Naive thymus-derived CD4-positive, alpha-beta T cell (primary cell): ENCODE measurements at regions of chrX and their contacts with region 1.

Region 1: DNA sequence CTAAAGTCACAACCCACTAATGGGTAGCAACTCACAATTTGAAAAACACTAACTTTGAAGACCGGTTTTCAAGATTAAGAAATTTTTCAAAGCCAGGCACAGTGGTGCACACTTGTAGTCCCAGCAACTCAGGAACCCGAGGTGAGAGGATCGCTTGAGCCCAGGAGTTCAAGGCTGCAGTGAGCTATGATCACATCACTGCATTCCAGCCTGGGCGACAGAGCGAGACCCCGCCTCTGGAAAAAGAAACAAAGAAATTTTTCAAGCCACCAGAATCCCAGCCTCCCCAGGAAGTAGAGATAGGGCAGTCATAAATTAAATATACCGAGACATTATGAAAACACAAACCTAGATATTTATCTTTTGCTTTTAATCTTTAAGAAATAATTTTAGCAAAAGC is 13.0 kb downstream of the SMARCA1 start:
- DNase-seq: no peak
- ATAC-seq: no peak
- H3K4me3 ChIP-seq: no peak overlapping the region
- H3K4me3 Mint-ChIP-seq: no peak overlapping the region
- H3K27ac ChIP-seq: no peak overlapping the region
- H3K27ac Mint-ChIP-seq: no peak overlapping the region
- H3K4me1 ChIP-seq: no peaks in the 10 kb centered on the region
- H3K4me1 Mint-ChIP-seq: peaks cover 0 to 8% (median 0%) of the 10 kb centered on the region in 7 donors
- H3K27me3 ChIP-seq: no peaks in the 10 kb centered on the region
- H3K27me3 Mint-ChIP-seq: peaks cover 0 to 6% (median 0%) of the 10 kb centered on the region in 5 donors

Region 2: GRCh38 chrX:129522184-129523078 is 12.1 kb after region 1 on chrX:
- CTCF ChIA-PET with region 1: no interaction called
- POLR2A ChIA-PET with region 1: no interaction called
- intact Hi-C with region 1: loop called in 1 of 2 experiments (anchors 2 kb)
- DNase-seq: peak in 4 of 9 donors; percentile 8 to 18 (median 14)
- ATAC-seq: peak; percentile 12
- H3K4me3 ChIP-seq: peak overlapping the region; percentile 46
- H3K4me3 Mint-ChIP-seq: peak overlapping the region; percentile 74 to 92 (median 88)
- H3K27ac ChIP-seq: peak overlapping the region; percentile 62
- H3K27ac Mint-ChIP-seq: peak overlapping the region in 8 of 9 donors; percentile 2 to 83 (median 72)
- H3K4me1 ChIP-seq: peaks cover 0 to 7% of the 10 kb centered on the region in 2 donors
- H3K4me1 Mint-ChIP-seq: peaks cover 0 to 18% (median 11%) of the 10 kb centered on the region in 7 donors
- H3K27me3 ChIP-seq: peaks cover 0 to 2% of the 10 kb centered on the region in 2 donors
- H3K27me3 Mint-ChIP-seq: peaks cover 0 to 50% (median 0%) of the 10 kb centered on the region in 5 donors

Region 3: DNA sequence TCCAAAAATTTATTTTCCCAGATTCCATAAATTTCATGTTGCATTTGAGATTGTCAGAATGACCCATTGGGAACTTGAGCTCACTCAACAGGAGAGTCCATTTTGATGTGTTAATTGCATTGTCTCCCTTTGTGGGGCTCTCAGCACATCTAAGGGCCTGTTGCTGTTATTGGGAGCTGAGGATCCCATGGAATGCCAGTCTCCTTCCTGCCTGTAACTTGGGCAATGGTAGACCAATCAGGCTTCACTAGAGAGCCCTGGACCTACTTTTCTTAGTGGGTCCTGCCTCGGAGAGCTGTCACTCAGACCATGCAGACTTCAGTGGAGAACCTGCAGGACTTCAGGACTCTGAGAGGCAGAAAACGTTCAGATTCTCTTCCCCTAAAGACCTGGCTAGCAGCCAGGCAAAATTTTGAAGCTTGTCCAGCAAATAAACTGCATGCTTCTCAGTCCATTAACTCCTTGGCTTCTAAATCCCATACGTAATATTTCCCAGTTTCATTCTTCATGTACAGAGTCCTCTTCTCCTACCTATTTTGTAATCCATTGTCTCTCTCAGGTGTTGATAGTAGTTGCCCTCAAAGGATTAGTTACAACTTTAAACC is 54.8 kb after region 1 on chrX:
- CTCF ChIA-PET with region 1: no interaction called
- POLR2A ChIA-PET with region 1: no interaction called
- intact Hi-C with region 1: no loop called
- DNase-seq: no peak
- ATAC-seq: no peak
- H3K4me3 ChIP-seq: no peak overlapping the region
- H3K4me3 Mint-ChIP-seq: peak overlapping the region in 1 of 10 donors; percentile 36
- H3K27ac ChIP-seq: no peak overlapping the region
- H3K27ac Mint-ChIP-seq: no peak overlapping the region
- H3K4me1 ChIP-seq: no peaks in the 10 kb centered on the region
- H3K4me1 Mint-ChIP-seq: peaks cover 5 to 13% (median 12%) of the 10 kb centered on the region in 7 donors
- H3K27me3 ChIP-seq: no peaks in the 10 kb centered on the region
- H3K27me3 Mint-ChIP-seq: no peaks in the 10 kb centered on the region